Activated naive CD4-positive, alpha-beta T cell treated with anti-CD3 and anti-CD28 coated beads for 36 hours (primary cell): ENCODE measurements at regions of chr18 and their contacts with region 1.

Region 1: DNA sequence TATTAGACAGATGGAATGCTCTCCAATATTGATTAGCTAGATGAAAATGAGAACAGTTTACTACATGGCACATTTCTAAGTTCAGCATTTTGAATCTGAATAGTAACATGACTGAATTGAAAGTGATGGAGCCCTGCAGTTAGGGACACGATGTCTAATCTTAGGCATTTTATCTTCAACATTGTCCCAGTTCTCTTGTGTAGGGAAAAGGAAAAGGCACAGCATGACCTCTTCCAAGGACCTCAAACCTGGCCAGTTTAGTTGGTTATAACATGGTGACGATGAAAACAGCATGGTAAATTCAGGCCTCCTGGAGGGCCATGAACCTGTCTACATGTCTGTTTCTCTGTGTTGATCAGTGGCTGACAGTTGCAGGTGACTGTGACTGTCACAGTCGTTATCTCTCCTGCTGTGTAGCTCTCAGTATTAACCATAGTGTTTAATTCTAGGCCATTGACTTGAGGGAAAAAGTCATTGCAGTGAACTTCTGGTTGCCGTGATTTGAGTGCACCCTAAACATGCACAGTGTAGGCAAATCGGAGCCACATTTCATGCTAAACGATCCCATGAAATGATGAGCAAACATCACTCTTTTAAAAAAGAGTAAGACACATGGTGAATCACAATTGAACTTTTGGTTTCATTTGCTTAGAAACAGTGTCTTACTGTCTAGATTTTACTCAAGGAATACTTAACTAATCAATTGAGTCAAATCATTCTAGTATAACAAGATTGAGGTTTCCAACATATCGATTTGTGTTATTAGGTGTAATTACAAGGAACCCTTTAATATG is 129.7 kb downstream of the PHLPP1 start:
- DNase-seq: peak; percentile 57
- H3K4me3 Mint-ChIP-seq: no peak overlapping the region
- H3K27ac Mint-ChIP-seq: peak overlapping the region; percentile 24
- H3K4me1 Mint-ChIP-seq: peaks cover 24% of the 10 kb centered on the region
- H3K27me3 Mint-ChIP-seq: no peaks in the 10 kb centered on the region

Region 2: GRCh38 chr18:62505669-62506494 is 339.2 kb before region 1 on chr18:
- CTCF ChIA-PET with region 1: no interaction called
- intact Hi-C with region 1: loop called (anchors 1 kb)
- DNase-seq: peak; percentile 63
- H3K4me3 Mint-ChIP-seq: peak overlapping the region; percentile 55
- H3K27ac Mint-ChIP-seq: peak overlapping the region; percentile 86
- H3K4me1 Mint-ChIP-seq: peaks cover 20% of the 10 kb centered on the region
- H3K27me3 Mint-ChIP-seq: no peaks in the 10 kb centered on the region

Region 3: GRCh38 chr18:62771494-62772270 is 73.4 kb before region 1 on chr18:
- CTCF ChIA-PET with region 1: no interaction called
- intact Hi-C with region 1: loop called (anchors 1 kb)
- DNase-seq: peak; percentile 19
- H3K4me3 Mint-ChIP-seq: no peak overlapping the region
- H3K27ac Mint-ChIP-seq: no peak overlapping the region
- H3K4me1 Mint-ChIP-seq: peaks cover 17% of the 10 kb centered on the region
- H3K27me3 Mint-ChIP-seq: no peaks in the 10 kb centered on the region

Region 4: GRCh38 chr18:62828852-62829251 is 16.2 kb before region 1 on chr18:
- CTCF ChIA-PET with region 1: no interaction called
- intact Hi-C with region 1: loop called (anchors 1 kb)
- DNase-seq: no peak
- H3K4me3 Mint-ChIP-seq: no peak overlapping the region
- H3K27ac Mint-ChIP-seq: no peak overlapping the region
- H3K4me1 Mint-ChIP-seq: peaks cover 7% of the 10 kb centered on the region
- H3K27me3 Mint-ChIP-seq: no peaks in the 10 kb centered on the region

Region 5: DNA sequence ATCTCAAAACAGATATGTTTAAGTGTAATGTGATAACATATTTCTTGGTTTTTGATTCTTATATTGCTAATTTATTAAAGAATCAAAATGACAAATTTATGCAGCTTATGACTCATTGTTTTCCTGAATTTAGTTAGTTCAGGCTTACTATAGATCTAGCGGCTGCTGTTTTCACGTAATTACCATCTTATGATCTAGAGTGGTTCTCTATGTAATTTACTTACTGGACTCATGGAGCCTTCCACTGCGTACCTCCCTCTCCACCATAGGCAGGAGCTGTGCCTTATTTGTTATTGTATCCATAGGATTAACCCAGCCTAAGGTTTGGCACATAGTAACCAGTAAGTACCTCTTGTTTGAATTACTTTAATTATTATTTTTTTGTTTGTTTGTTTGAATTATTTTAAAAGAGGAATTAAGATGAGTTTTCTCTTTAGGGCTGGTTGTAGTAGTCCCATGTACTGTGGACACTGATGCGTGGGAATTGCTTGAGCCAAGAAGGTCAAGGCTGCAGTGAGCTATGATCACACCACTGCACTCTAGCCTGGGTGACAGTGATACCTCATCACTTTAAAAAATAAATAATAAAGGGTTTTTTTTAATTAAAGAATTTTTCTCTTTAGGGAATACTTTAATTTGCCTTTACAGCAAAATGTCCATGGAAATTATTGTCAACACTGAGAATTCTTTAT is 35.8 kb after region 1 on chr18:
- CTCF ChIA-PET with region 1: no interaction called
- intact Hi-C with region 1: loop called (anchors 1 kb)
- DNase-seq: no peak
- H3K4me3 Mint-ChIP-seq: no peak overlapping the region
- H3K27ac Mint-ChIP-seq: no peak overlapping the region
- H3K4me1 Mint-ChIP-seq: peaks cover 17% of the 10 kb centered on the region
- H3K27me3 Mint-ChIP-seq: no peaks in the 10 kb centered on the region

Region 6: GRCh38 chr18:62982600-62983251 is 137.7 kb after region 1 on chr18:
- CTCF ChIA-PET with region 1: no interaction called
- intact Hi-C with region 1: no loop called
- DNase-seq: peak; percentile 75
- H3K4me3 Mint-ChIP-seq: no peak overlapping the region
- H3K27ac Mint-ChIP-seq: no peak overlapping the region
- H3K4me1 Mint-ChIP-seq: no peaks in the 10 kb centered on the region
- H3K27me3 Mint-ChIP-seq: no peaks in the 10 kb centered on the region

Region 7: GRCh38 chr18:63949068-63949737 is 1104.2 kb after region 1 on chr18 and contains the start of gene HMSD:
- CTCF ChIA-PET with region 1: no interaction called
- intact Hi-C with region 1: loop called (anchors 1 kb)
- DNase-seq: peak; percentile 89
- H3K4me3 Mint-ChIP-seq: peak within 1 kb of the TSS; percentile 82
- H3K27ac Mint-ChIP-seq: peak within 1 kb of the TSS; percentile 86
- H3K4me1 Mint-ChIP-seq: peaks cover 43% of the 10 kb centered on the region
- H3K27me3 Mint-ChIP-seq: peaks cover 26% of the 10 kb centered on the region
- total RNA-seq, gene HMSD: 25.0 to 31.7 TPM